Heart right ventricle (tissue), 16 donors: ENCODE measurements at regions of chr10 and their contacts with region 1.

Region 1: DNA sequence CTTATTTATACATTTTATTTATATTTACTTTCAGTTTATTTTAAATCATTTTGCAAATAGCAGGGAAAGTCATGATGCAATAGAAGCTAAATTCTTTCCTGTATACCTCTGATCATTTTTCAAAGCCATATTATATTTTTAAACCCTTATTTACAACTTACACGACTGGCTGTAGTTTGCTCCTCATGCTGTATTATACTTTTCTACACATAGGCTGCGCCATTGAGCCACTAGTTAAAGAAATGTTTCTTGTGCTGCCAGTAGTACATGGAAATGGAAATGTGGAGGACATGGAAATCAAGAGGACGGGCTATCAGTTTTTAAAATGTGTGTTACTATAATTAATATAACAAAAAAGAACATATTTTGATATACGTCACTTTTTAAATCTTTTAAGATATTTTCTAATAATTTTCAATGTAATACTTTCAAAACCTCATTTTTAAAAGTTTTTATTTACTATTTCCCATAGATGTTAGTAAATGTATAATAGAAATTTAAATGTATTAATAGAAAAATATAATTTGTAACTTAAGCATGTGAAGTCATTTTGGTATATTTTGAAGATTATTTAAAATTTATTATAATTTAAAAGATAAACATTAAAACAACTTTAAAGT is 118.5 kb downstream of the VTI1A start:
- DNase-seq: peak in 1 of 2 donors; percentile 29
- ATAC-seq: peak in 3 of 8 donors; percentile 55 to 64 (median 63)
- H3K4me3 ChIP-seq: no peak overlapping the region
- H3K27ac ChIP-seq: no peak overlapping the region
- H3K4me1 ChIP-seq: no peaks in the 10 kb centered on the region
- H3K27me3 ChIP-seq: no peaks in the 10 kb centered on the region
- CTCF ChIP-seq: peak; percentile 34 to 72 (median 66)

Region 2: DNA sequence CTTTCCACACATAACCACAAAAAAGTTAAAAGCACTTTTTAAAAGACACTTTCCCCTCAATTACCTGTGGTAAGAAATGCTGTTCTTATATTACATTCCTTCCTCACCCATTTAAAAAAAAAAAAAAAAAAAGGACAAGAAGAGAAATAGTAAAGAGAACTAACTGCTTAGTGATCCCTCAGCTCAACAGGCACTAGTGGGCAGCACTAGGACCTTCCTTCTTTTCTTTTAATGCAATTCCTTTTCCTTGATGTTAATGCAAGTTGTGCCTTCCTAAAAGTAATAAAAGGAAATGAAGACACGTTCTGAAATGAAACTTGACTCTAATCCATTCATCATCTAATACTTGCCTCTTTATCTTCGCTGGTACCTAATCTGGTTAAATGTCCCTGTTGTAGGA is 574.2 kb after region 1 on chr10:
- intact Hi-C with region 1: loop called in 1 of 10 experiments (anchors 10 kb)
- DNase-seq: no peak
- ATAC-seq: no peak
- H3K4me3 ChIP-seq: no peak overlapping the region
- H3K27ac ChIP-seq: no peak overlapping the region
- H3K4me1 ChIP-seq: peaks cover 0 to 11% (median 7%) of the 10 kb centered on the region in 9 donors
- H3K27me3 ChIP-seq: no peaks in the 10 kb centered on the region
- CTCF ChIP-seq: peak in 2 of 9 donors; percentile 20 to 34

Region 3: GRCh38 chr10:113521123-113521795 is 955.7 kb after region 1 on chr10:
- intact Hi-C with region 1: loop called in 1 of 10 experiments (anchors 10 kb)
- DNase-seq: peak; percentile 29 to 68
- ATAC-seq: peak; percentile 73 to 89 (median 84)
- H3K4me3 ChIP-seq: no peak overlapping the region
- H3K27ac ChIP-seq: no peak overlapping the region
- H3K4me1 ChIP-seq: peaks cover 0 to 14% (median 5%) of the 10 kb centered on the region in 9 donors
- H3K27me3 ChIP-seq: peaks cover 0 to 4% (median 0%) of the 10 kb centered on the region in 7 donors
- CTCF ChIP-seq: peak; percentile 85 to 97 (median 93)

Region 4: GRCh38 chr10:113563306-113564088 is 998.0 kb after region 1 on chr10:
- intact Hi-C with region 1: loop called in 1 of 10 experiments (anchors 5 kb)
- DNase-seq: peak; percentile 55 to 79
- ATAC-seq: peak; percentile 76 to 92 (median 86)
- H3K4me3 ChIP-seq: peak overlapping the region in 8 of 10 donors; percentile 21 to 55 (median 46)
- H3K27ac ChIP-seq: no peak overlapping the region
- H3K4me1 ChIP-seq: peaks cover 0 to 5% (median 0%) of the 10 kb centered on the region in 9 donors
- H3K27me3 ChIP-seq: peaks cover 0 to 15% (median 5%) of the 10 kb centered on the region in 7 donors
- CTCF ChIP-seq: peak; percentile 92 to 99 (median 98)